ENCODE measurements at regions of chr4 and their contacts with region 1.

Region 1: GRCh38 chr4:67700738-67701516 is at the start of gene UBA6:
- DNase-seq: peak; percentile 95 to 99 (median 96)
- ATAC-seq: peak; percentile 90
- H3K4me3 ChIP-seq: peak within 1 kb of the TSS; percentile 82
- H3K27ac ChIP-seq: peak within 1 kb of the TSS; percentile 89
- H3K4me1 ChIP-seq: peaks cover 3 to 12% of the 10 kb centered on the region in 2 experiments; a peak in 2 of 5 replicates
- H3K27me3 ChIP-seq: no peaks in the 10 kb centered on the region
- CTCF ChIP-seq: peak; percentile 37 to 69 (median 56); a peak in 5 of 6 replicates
- EP300 ChIP-seq: peak; percentile 43; the same call in 1 of the 2 replicates
- POLR2A ChIP-seq: peak; percentile 89
- RAD21 ChIP-seq: no peak
- polyA plus RNA-seq, gene UBA6: 22.9 to 30.1 TPM

Region 2: DNA sequence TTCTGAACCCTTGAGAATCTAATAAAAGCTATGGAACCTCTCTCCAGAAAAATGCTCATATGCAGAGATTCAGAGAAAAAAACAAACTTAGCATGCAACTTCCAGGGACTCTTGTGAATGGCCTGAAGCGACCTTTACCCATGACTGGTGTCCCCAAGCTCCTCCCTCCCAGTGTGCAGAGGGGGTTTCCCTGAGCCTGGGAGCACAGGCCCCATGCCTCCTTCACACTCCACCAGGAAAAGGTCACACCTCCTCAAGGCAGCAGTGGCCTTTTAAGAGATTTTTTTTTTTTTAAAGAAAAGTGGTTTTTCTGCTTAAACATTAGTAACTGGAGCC is 13.3 kb after region 1 on chr4:
- CTCF ChIA-PET with region 1: no interaction called
- POLR2A ChIA-PET with region 1: interaction called, 13 read pairs
- in situ Hi-C with region 1: no loop called
- intact Hi-C with region 1: no loop called
- DNase-seq: peak in 2 of 4 experiments; percentile 45 to 49
- ATAC-seq: peak; percentile 50
- H3K4me3 ChIP-seq: no peak overlapping the region
- H3K27ac ChIP-seq: peak overlapping the region; percentile 79
- H3K4me1 ChIP-seq: peaks cover 33 to 48% of the 10 kb centered on the region in 2 experiments
- H3K27me3 ChIP-seq: no peaks in the 10 kb centered on the region
- CTCF ChIP-seq: no peak
- EP300 ChIP-seq: no peak
- POLR2A ChIP-seq: no peak
- RAD21 ChIP-seq: no peak

Region 3: GRCh38 chr4:67721770-67722597 is 21.1 kb after region 1 on chr4:
- CTCF ChIA-PET with region 1: no interaction called
- POLR2A ChIA-PET with region 1: interaction called, 6 read pairs
- in situ Hi-C with region 1: no loop called
- intact Hi-C with region 1: loop called (anchors 1 kb)
- DNase-seq: peak in 2 of 4 experiments; percentile 55 to 91
- ATAC-seq: peak; percentile 86
- H3K4me3 ChIP-seq: peak overlapping the region; percentile 28; the same call in 1 of the 2 replicates
- H3K27ac ChIP-seq: peak overlapping the region; percentile 99
- H3K4me1 ChIP-seq: peaks cover 19 to 52% of the 10 kb centered on the region in 2 experiments
- H3K27me3 ChIP-seq: no peaks in the 10 kb centered on the region
- CTCF ChIP-seq: no peak
- EP300 ChIP-seq: peak; percentile 81; the same call in 1 of the 2 replicates
- POLR2A ChIP-seq: peak; percentile 75
- RAD21 ChIP-seq: peak in 1 of 2 experiments; percentile 66; a peak in 2 of 4 replicates